Ascending aorta (tissue), 2 donors: ENCODE measurements at regions of chr18 and their contacts with region 1.

Region 1: GRCh38 chr18:45248240-45248903 is 366.9 kb upstream of the SLC14A2 start:
- DNase-seq: peak in 1 of 2 donors; percentile 88
- H3K4me3 ChIP-seq: no peak overlapping the region
- H3K27ac ChIP-seq: peak overlapping the region; percentile 89 to 92
- H3K4me1 ChIP-seq: peaks cover 9 to 31% of the 10 kb centered on the region in 2 donors
- H3K27me3 ChIP-seq: no peaks in the 10 kb centered on the region
- CTCF ChIP-seq: no peak

Region 2: GRCh38 chr18:44507729-44508325 is 740.5 kb before region 1 on chr18:
- intact Hi-C with region 1: no loop called
- DNase-seq: peak in 1 of 2 donors; percentile 66
- H3K4me3 ChIP-seq: no peak overlapping the region
- H3K27ac ChIP-seq: peak overlapping the region in 1 of 2 donors; percentile 4
- H3K4me1 ChIP-seq: no peaks in the 10 kb centered on the region
- H3K27me3 ChIP-seq: no peaks in the 10 kb centered on the region
- CTCF ChIP-seq: no peak

Region 3: GRCh38 chr18:44789710-44790109 is 458.7 kb before region 1 on chr18:
- intact Hi-C with region 1: loop called (anchors 5 kb)
- DNase-seq: no peak
- H3K4me3 ChIP-seq: no peak overlapping the region
- H3K27ac ChIP-seq: peak overlapping the region; percentile 23 to 26
- H3K4me1 ChIP-seq: peaks cover 12 to 38% of the 10 kb centered on the region in 2 donors
- H3K27me3 ChIP-seq: no peaks in the 10 kb centered on the region
- CTCF ChIP-seq: no peak

Region 4: DNA sequence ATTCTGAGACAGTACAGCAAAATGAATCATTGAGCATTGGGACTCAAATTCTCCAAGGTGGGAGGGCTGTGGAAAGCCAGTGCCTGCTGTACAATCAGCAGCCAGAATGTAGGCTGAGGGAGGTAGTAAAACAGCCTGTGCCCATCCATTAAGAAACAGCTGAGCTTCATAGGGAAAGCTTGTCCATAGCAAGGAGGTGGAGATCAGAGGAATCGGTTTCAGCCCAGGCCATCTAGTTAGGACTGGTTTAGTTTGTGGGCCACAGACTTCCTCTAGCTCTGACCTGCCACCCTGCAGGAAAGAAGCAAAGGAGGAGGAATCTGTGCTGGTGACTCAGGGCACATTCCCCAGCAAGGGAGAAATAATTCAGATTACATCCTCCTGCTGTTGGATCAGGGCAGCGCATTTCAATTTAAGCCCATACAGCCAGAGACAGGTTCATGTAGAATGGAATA is 234.3 kb before region 1 on chr18:
- intact Hi-C with region 1: loop called (anchors 10 kb)
- DNase-seq: peak in 1 of 2 donors; percentile 69
- H3K4me3 ChIP-seq: no peak overlapping the region
- H3K27ac ChIP-seq: peak overlapping the region; percentile 59 to 61
- H3K4me1 ChIP-seq: peaks cover 3 to 34% of the 10 kb centered on the region in 2 donors
- H3K27me3 ChIP-seq: no peaks in the 10 kb centered on the region
- CTCF ChIP-seq: peak in 2 of 3 experiments; percentile 18 to 19

Region 5: DNA sequence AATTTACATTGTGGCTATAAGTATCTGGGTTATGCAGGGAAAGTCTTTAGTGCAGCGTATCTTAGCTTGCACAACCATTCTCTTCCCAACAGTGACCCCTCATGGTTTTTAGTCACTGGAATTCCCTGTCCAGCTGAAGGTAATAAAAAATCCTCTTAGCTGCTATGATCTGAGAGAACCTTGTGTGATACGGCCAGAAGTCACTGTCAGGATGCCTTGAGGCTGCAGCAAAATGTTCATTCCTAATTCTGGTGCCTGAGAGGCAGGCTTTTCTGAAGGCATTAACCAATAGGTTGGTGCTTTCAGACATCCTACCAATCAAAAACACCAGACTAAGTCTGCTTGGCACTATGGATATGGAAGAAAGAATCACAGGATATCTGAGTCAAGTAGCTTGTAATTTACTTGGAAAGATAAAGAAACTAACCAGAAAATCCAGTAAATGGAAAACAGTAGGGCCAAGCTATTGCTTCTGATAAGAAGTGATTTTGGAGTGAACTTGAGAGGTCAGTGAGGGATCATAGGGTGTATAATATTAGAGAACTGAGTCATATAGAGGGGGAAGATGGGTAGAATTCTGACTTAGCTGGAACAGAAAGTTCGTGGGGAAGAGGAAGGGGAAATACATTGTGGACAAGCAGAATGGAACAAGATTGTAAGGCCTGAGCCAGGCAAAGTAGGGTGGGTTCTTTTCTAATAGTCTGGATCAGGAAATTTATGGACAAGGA is 277.9 kb after region 1 on chr18:
- intact Hi-C with region 1: loop called (anchors 5 kb)
- DNase-seq: no peak
- H3K4me3 ChIP-seq: no peak overlapping the region
- H3K27ac ChIP-seq: peak overlapping the region; percentile 16 to 53
- H3K4me1 ChIP-seq: peaks cover 10 to 28% of the 10 kb centered on the region in 2 donors
- H3K27me3 ChIP-seq: no peaks in the 10 kb centered on the region
- CTCF ChIP-seq: peak in 1 of 3 experiments; percentile 36